Heart right ventricle (tissue), 16 donors: ENCODE measurements at regions of chr2 and their contacts with region 1.

Region 1: DNA sequence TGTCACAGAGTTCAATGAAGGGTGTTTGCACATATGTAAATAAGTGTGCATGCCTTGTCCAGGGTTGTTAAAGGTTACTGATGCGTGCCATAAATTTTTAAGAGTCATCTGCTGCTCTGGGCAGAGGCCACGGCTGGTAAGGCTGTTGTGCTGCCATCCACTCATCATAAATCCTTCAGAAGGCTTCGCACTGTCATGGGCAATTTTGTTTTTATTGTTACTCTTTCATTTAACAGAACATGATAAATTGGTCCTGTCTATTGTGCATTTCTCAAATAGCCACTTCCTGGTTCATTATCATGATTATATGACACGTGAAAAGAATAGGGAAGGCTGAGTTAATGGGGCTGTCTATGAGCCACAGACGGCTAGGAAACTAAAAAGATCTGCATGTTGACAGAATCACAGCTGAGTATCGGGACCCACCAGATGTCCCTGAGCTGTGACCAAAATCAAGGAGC is 634.3 kb upstream of the SOX11 start:
- DNase-seq: no peak
- ATAC-seq: no peak
- H3K4me3 ChIP-seq: no peak overlapping the region
- H3K27ac ChIP-seq: no peak overlapping the region
- H3K4me1 ChIP-seq: peaks cover 0 to 8% (median 0%) of the 10 kb centered on the region in 9 donors
- H3K27me3 ChIP-seq: no peaks in the 10 kb centered on the region
- CTCF ChIP-seq: no peak

Region 2: DNA sequence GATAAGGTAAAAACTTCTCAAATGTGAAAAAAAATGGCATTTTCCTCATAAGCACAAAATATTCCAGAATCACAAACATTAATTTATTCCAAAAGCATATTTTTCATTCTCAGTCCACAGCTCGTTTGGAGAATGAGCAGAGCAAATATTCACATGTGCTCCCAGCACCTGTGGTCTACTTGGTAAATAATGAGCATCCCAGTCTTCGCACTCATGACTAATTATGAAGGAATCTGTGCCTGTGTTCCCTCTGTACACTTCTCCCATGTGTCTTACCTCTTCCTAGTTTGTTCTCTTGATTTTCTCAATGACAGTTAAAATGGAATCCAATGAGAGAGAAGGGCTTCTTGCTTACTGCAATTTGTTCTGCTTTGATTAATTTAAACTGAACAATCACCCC is 36.8 kb before region 1 on chr2:
- intact Hi-C with region 1: no loop called
- DNase-seq: no peak
- ATAC-seq: no peak
- H3K4me3 ChIP-seq: no peak overlapping the region
- H3K27ac ChIP-seq: no peak overlapping the region
- H3K4me1 ChIP-seq: no peaks in the 10 kb centered on the region
- H3K27me3 ChIP-seq: no peaks in the 10 kb centered on the region
- CTCF ChIP-seq: no peak

Region 3: GRCh38 chr2:6412533-6413091 is 1354.7 kb after region 1 on chr2:
- intact Hi-C with region 1: loop called in 1 of 10 experiments (anchors 5 kb)
- DNase-seq: no peak
- ATAC-seq: no peak
- H3K4me3 ChIP-seq: no peak overlapping the region
- H3K27ac ChIP-seq: no peak overlapping the region
- H3K4me1 ChIP-seq: no peaks in the 10 kb centered on the region
- H3K27me3 ChIP-seq: peaks cover 0 to 20% (median 2%) of the 10 kb centered on the region in 7 donors
- CTCF ChIP-seq: no peak